Dorsolateral prefrontal cortex (tissue), 120 donors: ENCODE measurements at regions of chr11 and their contacts with region 1.

Region 1: GRCh38 chr11:7657306-7658025 is 15.8 kb downstream of the CYB5R2 start:
- DNase-seq: peak in 9 of 10 donors; percentile 23 to 78 (median 71)
- H3K4me3 ChIP-seq: no peak overlapping the region
- H3K27ac ChIP-seq: peak overlapping the region in 56 of 59 donors; percentile 28 to 98 (median 82)
- H3K27me3 ChIP-seq: no peaks in the 10 kb centered on the region
- CTCF ChIP-seq: peak in 55 of 56 donors; percentile 50 to 90 (median 73)

Region 2: DNA sequence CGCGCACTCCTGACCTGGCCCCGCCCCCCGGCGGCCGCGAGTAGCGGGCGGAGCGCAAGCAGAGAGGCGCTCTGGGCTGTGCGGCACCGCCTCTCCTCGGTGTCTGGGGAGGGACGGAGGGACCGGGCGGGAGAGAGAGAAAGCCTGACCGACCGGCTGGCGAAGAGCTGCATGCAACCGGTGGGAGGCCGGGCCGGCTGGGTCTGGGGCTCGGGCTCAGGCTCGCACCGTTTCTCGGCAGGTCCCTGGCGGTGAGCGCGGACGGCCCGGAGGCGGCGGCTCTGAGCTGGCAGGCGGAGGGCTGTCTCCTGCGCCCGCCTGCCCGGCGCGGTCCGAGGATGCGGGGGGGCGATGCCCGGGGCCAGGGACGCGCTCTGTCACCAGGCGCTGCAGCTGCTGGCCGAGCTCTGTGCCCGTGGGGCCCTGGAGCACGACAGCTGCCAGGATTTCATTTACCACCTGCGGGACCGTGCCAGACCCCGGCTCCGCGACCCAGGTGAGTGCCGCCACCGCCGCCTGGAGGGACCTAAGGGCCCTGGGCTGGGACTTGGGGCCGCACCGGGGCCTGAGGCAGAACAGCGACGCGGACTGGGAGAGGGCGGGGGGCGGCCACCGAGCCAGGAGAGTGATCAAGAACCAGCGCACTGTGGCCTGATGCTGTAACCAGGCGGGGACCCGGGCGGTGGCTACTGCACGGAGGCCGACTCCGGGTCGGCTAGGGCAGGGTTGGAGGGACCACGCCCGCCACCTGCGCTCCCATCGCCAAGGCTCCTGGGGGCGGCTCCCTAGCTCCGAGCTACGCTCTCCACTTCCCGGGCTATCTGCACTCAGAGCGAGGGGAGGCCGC is 405.4 kb before region 1 on chr11 and contains the start of gene SYT9:
- intact Hi-C with region 1: loop called in 1 of 2 experiments (anchors 10 kb)
- DNase-seq: peak; percentile 38 to 83 (median 72)
- H3K4me3 ChIP-seq: peak within 1 kb of the TSS; percentile 54 to 97 (median 82)
- H3K27ac ChIP-seq: peak within 1 kb of the TSS in 53 of 59 donors; percentile 19 to 86 (median 66)
- H3K27me3 ChIP-seq: peaks cover 0 to 17% (median 0%) of the 10 kb centered on the region in 45 donors
- CTCF ChIP-seq: peak in 45 of 56 donors; percentile 4 to 66 (median 33)
- total RNA-seq, gene SYT9: 8.3 to 25.6 (median 12.9) TPM

Region 3: DNA sequence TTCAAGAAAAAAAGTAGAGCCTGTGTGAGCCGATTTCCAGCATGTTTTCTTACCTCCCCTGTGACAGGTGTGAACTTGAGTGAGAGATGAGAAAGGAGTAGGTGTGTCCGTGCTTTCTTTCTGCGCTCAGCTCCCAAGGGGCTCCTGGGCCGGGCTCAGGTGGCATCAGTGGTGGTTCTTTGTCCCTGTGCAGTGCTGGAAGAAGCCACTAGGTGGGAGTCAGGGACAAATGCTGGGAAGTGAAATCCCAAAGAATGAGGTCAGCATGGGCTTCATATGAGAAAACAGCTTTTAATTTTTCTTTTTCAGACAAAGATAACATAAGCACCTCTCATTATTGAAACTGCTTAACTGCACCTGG is 85.8 kb before region 1 on chr11:
- intact Hi-C with region 1: loop called (anchors 1 to 2 kb)
- DNase-seq: peak; percentile 49 to 79 (median 70)
- H3K4me3 ChIP-seq: no peak overlapping the region
- H3K27ac ChIP-seq: peak overlapping the region; percentile 26 to 99 (median 81)
- H3K27me3 ChIP-seq: no peaks in the 10 kb centered on the region
- CTCF ChIP-seq: peak; percentile 81 to 99 (median 95)

Region 4: GRCh38 chr11:7577291-7578190 is 79.9 kb before region 1 on chr11:
- intact Hi-C with region 1: loop called in 1 of 2 experiments (anchors 2 kb)
- DNase-seq: peak; percentile 10 to 89 (median 78)
- H3K4me3 ChIP-seq: peak overlapping the region; percentile 11 to 71 (median 48)
- H3K27ac ChIP-seq: peak overlapping the region; percentile 80 to 99 (median 97)
- H3K27me3 ChIP-seq: no peaks in the 10 kb centered on the region
- CTCF ChIP-seq: peak in 27 of 56 donors; percentile 1 to 58 (median 25)

Region 5: GRCh38 chr11:7613394-7613720 is 44.1 kb before region 1 on chr11:
- intact Hi-C with region 1: no loop called
- DNase-seq: no peak
- H3K4me3 ChIP-seq: no peak overlapping the region
- H3K27ac ChIP-seq: peak overlapping the region in 6 of 59 donors; percentile 4 to 58 (median 26)
- H3K27me3 ChIP-seq: no peaks in the 10 kb centered on the region
- CTCF ChIP-seq: no peak